BJ (cell line): ENCODE measurements at regions of chr13 and their contacts with region 1.

Region 1: DNA sequence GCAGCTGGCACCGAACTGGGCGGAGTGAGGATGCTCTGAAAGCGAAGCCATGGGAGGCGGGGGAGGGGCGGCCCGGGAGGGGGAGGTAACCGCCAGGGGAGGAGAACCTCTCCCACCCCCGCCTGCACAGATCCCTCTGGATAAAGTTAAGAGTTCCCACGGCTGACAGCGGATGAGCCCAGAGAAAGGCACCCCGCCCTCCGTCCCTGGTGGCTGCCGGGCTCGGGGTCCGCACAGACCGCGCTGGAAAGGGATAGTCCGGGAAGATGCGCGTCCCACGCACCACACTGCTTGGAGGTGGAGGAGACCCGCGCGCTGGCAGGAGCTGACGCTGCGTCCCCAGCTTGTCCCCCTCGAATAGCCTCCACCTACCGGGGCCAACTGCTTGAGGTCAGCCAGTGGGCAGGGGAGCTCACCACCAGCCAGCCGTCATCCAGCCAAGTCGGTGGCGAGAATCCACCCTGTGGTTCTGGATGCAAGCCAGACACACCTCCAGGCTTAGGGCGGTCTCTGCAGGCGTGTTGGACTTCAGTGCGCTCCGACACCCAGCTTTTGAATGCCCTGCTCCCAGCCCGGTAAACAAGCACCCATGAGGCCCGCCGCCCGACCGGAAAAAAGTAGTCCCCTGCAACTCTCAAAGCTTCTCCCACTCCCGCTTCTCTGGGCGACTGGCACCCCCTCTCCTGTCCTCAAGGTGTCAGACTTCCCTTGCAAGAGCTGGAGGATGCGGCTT is at the start of gene TRPC4:
- DNase-seq: no peak
- H3K4me3 ChIP-seq: peak within 1 kb of the TSS; percentile 75
- H3K27me3 ChIP-seq: no peaks in the 10 kb centered on the region
- CTCF ChIP-seq: peak; percentile 66
- polyA plus RNA-seq, gene TRPC4: 6.2 and 10.1 TPM in 2 replicates

Region 2: GRCh38 chr13:37257051-37257450 is 612.9 kb before region 1 on chr13:
- CTCF ChIA-PET with region 1: no interaction called
- POLR2A ChIA-PET with region 1: no interaction called
- DNase-seq: no peak
- H3K4me3 ChIP-seq: no peak overlapping the region
- H3K27me3 ChIP-seq: no peaks in the 10 kb centered on the region
- CTCF ChIP-seq: no peak

Region 3: GRCh38 chr13:37338726-37339385 is 531.1 kb before region 1 on chr13:
- CTCF ChIA-PET with region 1: no interaction called
- POLR2A ChIA-PET with region 1: no interaction called
- DNase-seq: no peak
- H3K4me3 ChIP-seq: no peak overlapping the region
- H3K27me3 ChIP-seq: no peaks in the 10 kb centered on the region
- CTCF ChIP-seq: no peak

Region 4: DNA sequence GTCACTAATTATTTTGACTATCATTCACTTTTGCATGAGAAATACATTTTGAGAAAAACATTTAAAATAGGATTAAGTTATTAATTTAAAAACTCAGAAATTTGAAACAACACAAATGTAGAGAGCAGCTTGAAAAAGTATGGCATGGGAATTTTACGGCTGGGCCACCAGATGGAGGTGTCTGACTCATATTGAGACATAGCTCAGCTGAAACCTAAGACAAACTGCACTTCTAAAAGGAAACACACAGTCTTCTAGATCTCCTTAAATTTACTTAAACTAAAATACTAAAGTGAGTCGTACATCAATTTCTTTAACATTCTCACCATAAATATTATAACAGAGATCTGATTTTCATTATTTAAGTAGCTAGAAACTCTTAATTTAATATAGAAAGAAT is 229.4 kb before region 1 on chr13:
- CTCF ChIA-PET with region 1: interaction called, 24 read pairs
- POLR2A ChIA-PET with region 1: no interaction called
- DNase-seq: no peak
- H3K4me3 ChIP-seq: no peak overlapping the region
- H3K27me3 ChIP-seq: no peaks in the 10 kb centered on the region
- CTCF ChIP-seq: peak; percentile 70

Region 5: GRCh38 chr13:37978680-37979079 is 108.8 kb after region 1 on chr13:
- CTCF ChIA-PET with region 1: no interaction called
- POLR2A ChIA-PET with region 1: no interaction called
- DNase-seq: no peak
- H3K4me3 ChIP-seq: no peak overlapping the region
- H3K27me3 ChIP-seq: no peaks in the 10 kb centered on the region
- CTCF ChIP-seq: no peak

Region 6: DNA sequence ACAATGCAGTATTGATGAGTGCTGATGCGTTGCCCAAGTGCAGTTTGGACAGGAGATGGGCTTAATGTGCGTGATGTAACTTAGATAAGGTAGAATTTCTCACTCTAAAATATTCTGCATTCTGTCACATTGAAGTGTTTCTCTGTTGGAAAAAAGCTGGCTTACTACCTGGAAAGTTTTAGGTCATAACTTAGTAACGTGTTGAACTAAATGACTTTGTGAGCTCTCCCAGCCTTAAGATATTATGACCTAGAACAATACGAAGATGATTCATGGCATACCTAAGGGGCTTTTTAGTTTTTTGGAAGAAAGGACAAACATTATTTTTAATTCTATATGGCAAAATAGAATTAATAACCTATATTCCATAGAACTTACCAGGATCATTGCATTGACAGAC is 488.8 kb after region 1 on chr13:
- CTCF ChIA-PET with region 1: no interaction called
- POLR2A ChIA-PET with region 1: no interaction called
- DNase-seq: no peak
- H3K4me3 ChIP-seq: no peak overlapping the region
- H3K27me3 ChIP-seq: no peaks in the 10 kb centered on the region
- CTCF ChIP-seq: no peak